ENCODE measurements at regions of chr6 and their contacts with region 1.

Region 1: DNA sequence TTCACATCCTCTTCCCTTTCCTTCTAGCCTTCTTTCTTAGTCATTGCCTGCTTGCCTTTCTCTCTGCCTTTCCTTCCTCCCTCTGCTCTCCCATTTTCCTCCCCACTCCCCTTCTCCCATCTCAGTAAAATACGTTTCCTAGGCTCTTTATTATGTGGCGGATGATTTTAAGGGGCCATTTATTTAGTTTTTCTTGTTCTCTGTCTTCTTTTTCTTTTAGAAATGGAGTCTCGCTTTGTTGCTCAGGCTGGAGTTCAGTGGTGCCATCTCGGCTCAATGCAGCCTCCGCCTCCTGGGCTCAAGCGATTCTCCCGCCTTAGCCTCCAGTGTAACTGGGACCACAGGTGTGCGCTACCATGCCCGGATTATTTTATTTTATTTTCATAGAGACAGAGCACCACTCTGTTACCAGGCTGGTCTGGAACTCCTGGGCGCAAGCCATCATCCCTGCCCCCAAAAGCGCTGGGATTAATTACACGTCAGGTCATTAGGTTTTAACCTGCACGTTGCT is 1.5 kb downstream of the MTHFD1L start:
- DNase-seq: no peak
- ATAC-seq: no peak
- H3K4me3 ChIP-seq: peak overlapping the region; percentile 59 to 91
- H3K27ac ChIP-seq: peak overlapping the region; percentile 66
- H3K4me1 ChIP-seq: 0 out of 2 replicates have a peak, but pooled peaks cover 2% of the 10 kb centered on the region
- H3K27me3 ChIP-seq: no peaks in the 10 kb centered on the region
- CTCF ChIP-seq: no peak

Region 2: GRCh38 chr6:150395398-150396009 is 471.5 kb before region 1 on chr6:
- CTCF ChIA-PET with region 1: no interaction called
- POLR2A ChIA-PET with region 1: interaction called, 11 read pairs
- in situ Hi-C with region 1: no loop called
- intact Hi-C with region 1: no loop called
- DNase-seq: no peak
- ATAC-seq: peak; percentile 96
- H3K4me3 ChIP-seq: no peak overlapping the region
- H3K27ac ChIP-seq: no peak overlapping the region
- H3K4me1 ChIP-seq: no peaks in the 10 kb centered on the region
- H3K27me3 ChIP-seq: 0 out of 2 replicates have a peak, but pooled peaks cover 3% of the 10 kb centered on the region
- CTCF ChIP-seq: peak; percentile 83

Measured in Panc1 (cell line).